Dendritic cell treated with granulocyte-macrophage colony-stimulating factor and Interleukin-4, amounts not matched to agents 40 ng/mL and 50 ng/mL, for 4 days (primary cell): ENCODE measurements at regions of chr1 and their contacts with region 1.

Region 1: GRCh38 chr1:89762779-89763648 is 57.8 kb upstream of the LRRC8D start:
- H3K4me3 Mint-ChIP-seq: peak overlapping the region; percentile 93
- H3K27ac Mint-ChIP-seq: peak overlapping the region; percentile 97
- H3K4me1 Mint-ChIP-seq: peaks cover 58% of the 10 kb centered on the region
- H3K27me3 Mint-ChIP-seq: no peaks in the 10 kb centered on the region

Region 2: DNA sequence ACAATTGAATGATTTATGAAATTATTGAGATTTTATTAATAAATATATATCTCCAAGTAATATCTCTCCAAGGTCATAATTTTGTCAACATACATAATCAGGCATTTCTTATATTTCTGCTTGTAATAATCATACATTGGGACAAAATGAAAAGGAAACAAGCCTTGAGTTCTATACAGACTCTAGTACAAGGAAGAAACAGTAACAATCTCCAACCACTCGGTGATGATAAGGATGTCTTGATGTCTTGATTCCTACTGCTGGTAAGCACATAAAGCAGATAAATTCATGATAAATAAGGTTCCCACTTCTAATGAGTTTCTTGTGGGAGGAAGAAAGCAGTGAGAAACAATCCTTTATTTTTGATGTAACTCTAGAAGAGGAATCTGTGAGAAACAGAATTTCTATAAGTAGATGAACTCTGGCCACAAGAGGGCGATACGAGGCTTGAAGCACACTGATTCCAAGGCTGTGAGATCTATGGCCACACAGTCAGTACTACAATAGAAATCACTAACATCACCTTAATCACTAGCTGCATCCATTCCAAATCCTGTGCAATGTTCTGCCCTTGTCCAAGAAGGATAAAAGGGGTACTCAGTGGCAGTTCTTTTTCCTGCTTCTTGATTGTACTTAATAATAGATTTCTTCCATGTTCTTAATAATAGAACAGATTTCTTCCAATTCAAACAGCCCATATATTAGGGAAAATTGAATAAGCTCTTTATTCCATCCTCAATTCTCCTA is 279.8 kb before region 1 on chr1:
- intact Hi-C with region 1: loop called (anchors 1 kb)
- H3K4me3 Mint-ChIP-seq: no peak overlapping the region
- H3K27ac Mint-ChIP-seq: no peak overlapping the region
- H3K4me1 Mint-ChIP-seq: peaks cover under 1% of the 10 kb centered on the region
- H3K27me3 Mint-ChIP-seq: no peaks in the 10 kb centered on the region

Region 3: DNA sequence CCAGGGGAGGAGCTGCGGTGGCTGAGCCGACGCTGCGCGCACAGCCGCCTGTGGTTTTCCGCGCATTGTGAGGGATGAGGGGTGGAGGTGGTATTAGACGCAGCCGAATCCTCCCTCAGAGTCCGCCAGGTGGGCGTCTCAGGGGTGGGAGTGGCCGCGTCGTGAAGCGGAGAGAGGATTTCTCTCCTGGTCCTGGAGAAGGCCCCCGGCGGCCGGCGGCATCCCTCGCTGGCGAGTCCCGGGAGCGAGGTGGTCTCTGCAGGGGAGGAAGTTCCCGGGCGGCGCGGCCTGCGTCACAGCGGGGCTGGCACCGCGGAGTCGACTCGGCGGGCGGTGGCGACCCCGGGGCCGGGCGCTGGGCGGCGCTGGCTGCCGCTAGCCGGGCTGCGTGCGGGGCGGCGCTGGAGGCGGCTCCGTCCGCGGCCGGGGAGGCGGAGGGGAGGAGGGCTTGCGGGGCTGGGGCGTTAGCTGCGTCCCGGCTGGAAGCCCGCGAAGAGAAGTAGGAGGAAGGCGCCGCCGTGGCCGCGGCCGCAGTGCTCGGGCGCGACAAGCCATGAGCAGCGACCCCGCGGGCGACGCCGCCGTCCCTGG is 130.3 kb before region 1 on chr1 and contains the start of gene LRRC8C:
- intact Hi-C with region 1: loop called (anchors 1 kb)
- H3K4me3 Mint-ChIP-seq: peak within 1 kb of the TSS; percentile 85
- H3K27ac Mint-ChIP-seq: peak within 1 kb of the TSS; percentile 90
- H3K4me1 Mint-ChIP-seq: peaks cover 48% of the 10 kb centered on the region
- H3K27me3 Mint-ChIP-seq: no peaks in the 10 kb centered on the region

Region 4: DNA sequence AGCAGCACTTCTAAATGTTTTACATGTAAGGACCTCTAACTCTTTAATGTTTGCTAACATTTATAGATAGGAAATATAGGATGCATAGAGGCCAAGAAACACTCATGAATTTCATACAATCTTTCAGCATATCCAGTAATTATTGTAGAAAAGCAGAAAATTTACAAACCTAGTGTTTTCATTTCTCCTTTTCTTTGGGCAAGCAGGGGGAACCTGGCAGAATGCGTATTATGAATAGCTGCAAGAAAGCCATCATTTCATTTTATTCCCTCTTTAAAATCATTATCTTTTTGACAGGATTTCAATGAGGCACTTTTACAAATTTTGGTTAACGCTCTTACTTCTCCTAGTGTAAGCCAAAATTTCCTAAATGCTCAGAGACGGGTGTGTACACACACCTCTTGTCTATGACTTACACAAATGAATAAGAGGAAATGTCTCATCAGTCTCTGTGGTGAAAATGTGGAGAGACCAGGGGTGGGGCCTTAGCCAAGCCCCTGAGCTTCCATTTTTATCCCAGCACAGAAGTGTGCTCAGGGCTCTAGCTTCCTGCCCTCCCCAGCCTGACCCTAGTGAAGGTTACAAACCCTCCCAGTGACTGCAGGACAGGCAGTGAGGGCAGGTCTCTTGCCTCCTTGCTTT is 38.5 kb before region 1 on chr1:
- intact Hi-C with region 1: loop called (anchors 2 kb)
- H3K4me3 Mint-ChIP-seq: peak overlapping the region; percentile 35
- H3K27ac Mint-ChIP-seq: peak overlapping the region; percentile 94
- H3K4me1 Mint-ChIP-seq: peaks cover 78% of the 10 kb centered on the region
- H3K27me3 Mint-ChIP-seq: no peaks in the 10 kb centered on the region

Region 5: GRCh38 chr1:89794406-89794805 is 31.4 kb after region 1 on chr1:
- intact Hi-C with region 1: no loop called
- H3K4me3 Mint-ChIP-seq: no peak overlapping the region
- H3K27ac Mint-ChIP-seq: no peak overlapping the region
- H3K4me1 Mint-ChIP-seq: peaks cover 9% of the 10 kb centered on the region
- H3K27me3 Mint-ChIP-seq: peaks cover 6% of the 10 kb centered on the region